Caco-2 (cell line): ENCODE measurements at regions of chr2 and their contacts with region 1.

Region 1: GRCh38 chr2:203740780-203741281 is 34.4 kb downstream of the CD28 start:
- DNase-seq: peak in 1 of 2 experiments; percentile 43
- H3K4me3 ChIP-seq: no peak overlapping the region
- H3K4me3 Mint-ChIP-seq: no peak overlapping the region
- H3K27ac Mint-ChIP-seq: peak overlapping the region; percentile 25
- H3K4me1 ChIP-seq: peaks cover 33% of the 10 kb centered on the region
- H3K4me1 Mint-ChIP-seq: peaks cover 6% of the 10 kb centered on the region
- H3K27me3 ChIP-seq: no peaks in the 10 kb centered on the region
- H3K27me3 Mint-ChIP-seq: no peaks in the 10 kb centered on the region
- CTCF ChIP-seq: no peak

Region 2: DNA sequence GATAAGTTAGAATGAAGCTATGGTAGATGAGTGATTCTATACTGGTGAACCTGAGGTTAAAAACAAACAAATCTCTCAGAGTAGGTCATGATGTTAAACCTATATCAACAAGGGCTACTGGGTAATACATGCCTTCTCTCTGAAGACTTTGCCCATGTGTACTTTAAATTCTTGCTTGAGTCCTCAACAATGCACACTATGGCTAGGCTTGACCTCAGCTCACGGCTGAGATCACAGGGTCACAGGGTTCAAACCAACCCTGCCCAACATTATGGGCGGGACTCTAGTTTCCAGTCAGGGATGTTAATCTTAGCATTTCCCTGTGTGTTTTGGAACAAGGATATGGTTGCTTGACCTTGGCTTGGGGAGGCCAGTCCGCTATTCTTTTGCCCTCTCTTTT is 26.7 kb before region 1 on chr2:
- CTCF ChIA-PET with region 1: no interaction called
- POLR2A ChIA-PET with region 1: no interaction called
- intact Hi-C with region 1: loop called (anchors 1 kb)
- DNase-seq: peak; percentile 74 to 82
- H3K4me3 ChIP-seq: no peak overlapping the region
- H3K4me3 Mint-ChIP-seq: no peak overlapping the region
- H3K27ac Mint-ChIP-seq: peak overlapping the region; percentile 37
- H3K4me1 ChIP-seq: peaks cover 37% of the 10 kb centered on the region
- H3K4me1 Mint-ChIP-seq: peaks cover 31% of the 10 kb centered on the region
- H3K27me3 ChIP-seq: no peaks in the 10 kb centered on the region
- H3K27me3 Mint-ChIP-seq: no peaks in the 10 kb centered on the region
- CTCF ChIP-seq: no peak